ENCODE measurements at regions of chr2 and their contacts with region 1.

Region 1: GRCh38 chr2:208466151-208466919 is 59.7 kb downstream of the PTH2R start:
- DNase-seq: peak in 1 of 2 experiments; percentile 23
- H3K4me3 ChIP-seq: no peak overlapping the region
- H3K27ac ChIP-seq: no peak overlapping the region
- H3K4me1 ChIP-seq: no peaks in the 10 kb centered on the region
- H3K27me3 ChIP-seq: no peaks in the 10 kb centered on the region
- CTCF ChIP-seq: peak; percentile 77

Region 2: DNA sequence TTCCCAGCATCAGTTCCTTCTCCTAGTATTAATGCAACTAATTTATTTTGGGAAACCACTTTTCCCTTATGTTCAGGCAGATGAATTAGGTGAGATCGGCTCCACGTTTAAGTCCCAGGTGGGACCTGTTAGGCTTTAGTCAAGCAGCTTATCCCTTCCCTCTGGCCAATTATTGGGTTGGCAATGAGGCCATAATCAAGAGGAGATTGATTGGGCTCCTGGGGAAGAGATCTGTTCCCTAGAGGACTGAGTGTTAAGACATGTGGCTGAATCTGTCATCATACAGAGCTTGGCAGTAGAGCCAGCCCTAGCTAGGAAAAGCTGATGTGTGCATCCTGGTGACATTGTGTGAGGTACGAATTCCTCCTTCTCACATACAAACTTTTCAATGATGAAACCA is 44.7 kb after region 1 on chr2:
- CTCF ChIA-PET with region 1: no interaction called
- POLR2A ChIA-PET with region 1: no interaction called
- intact Hi-C with region 1: no loop called
- DNase-seq: no peak
- H3K4me3 ChIP-seq: no peak overlapping the region
- H3K27ac ChIP-seq: no peak overlapping the region
- H3K4me1 ChIP-seq: no peaks in the 10 kb centered on the region
- H3K27me3 ChIP-seq: no peaks in the 10 kb centered on the region
- CTCF ChIP-seq: no peak

Region 3: DNA sequence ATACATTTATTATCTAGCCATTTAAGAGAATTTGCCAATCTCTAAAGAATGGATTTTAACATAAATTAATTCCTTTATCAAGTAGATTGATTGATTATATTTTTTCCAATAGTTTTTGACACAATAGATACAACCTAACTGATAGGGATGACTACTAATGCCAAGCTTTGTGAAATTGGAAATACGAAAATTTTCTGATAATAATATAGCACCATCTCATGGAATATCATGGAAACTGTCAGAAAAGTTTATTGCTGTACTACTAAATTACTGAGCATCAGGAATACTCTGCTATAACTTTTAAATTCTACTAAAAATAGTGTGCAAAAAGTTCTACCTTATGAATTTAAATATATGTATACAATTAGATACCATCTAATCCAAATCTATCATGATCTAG is 855.7 kb after region 1 on chr2:
- CTCF ChIA-PET with region 1: no interaction called
- POLR2A ChIA-PET with region 1: no interaction called
- intact Hi-C with region 1: loop called (anchors 1 kb)
- DNase-seq: no peak
- H3K4me3 ChIP-seq: no peak overlapping the region
- H3K27ac ChIP-seq: no peak overlapping the region
- H3K4me1 ChIP-seq: no peaks in the 10 kb centered on the region
- H3K27me3 ChIP-seq: no peaks in the 10 kb centered on the region
- CTCF ChIP-seq: peak; percentile 39; the same call in 1 of the 2 replicates

Measured in PC-9 (cell line).